ENCODE measurements at regions of chr2 and their contacts with region 1.

Region 1: DNA sequence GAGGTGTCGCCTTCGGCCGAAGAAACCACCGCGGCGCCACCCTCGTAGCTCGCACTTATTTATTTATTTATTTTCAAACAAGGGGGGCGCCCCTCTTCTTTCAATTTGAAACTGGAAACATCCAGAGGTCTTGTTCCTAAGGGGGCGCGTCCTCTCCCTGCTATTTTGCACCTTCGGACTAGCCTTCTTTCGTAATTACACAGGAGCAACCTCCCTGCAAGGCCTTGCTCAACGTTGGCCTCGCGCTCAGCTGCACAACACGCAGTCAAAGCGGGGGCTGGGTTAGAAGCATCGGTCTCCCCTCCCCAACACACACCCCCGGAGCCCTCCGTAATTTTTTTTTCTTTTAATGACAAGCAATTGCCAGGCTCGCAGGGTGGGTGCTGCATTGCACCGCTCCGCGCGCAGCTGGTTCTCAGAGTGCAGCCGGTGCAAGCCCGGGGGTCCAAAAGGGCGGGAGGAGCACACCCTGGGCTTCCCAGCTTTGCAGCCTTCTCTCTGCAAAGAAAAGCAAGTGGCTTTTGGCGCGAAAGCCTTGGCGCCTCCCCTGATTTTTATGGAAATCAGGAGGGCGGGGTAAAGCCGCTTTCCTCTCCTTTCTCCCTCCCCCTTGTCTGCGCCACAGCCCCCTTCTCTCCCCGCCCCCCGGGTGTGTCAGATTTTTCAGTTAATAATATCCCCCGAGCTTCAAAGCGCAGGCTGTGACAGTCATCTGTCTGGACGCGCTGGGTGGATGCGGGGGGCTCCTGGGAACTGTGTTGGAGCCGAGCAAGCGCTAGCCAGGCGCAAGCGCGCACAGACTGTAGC is at the start of gene MYCN:
- DNase-seq: no peak
- H3K4me3 ChIP-seq: peak within 1 kb of the TSS; percentile 47 to 63 (median 51)
- H3K27ac ChIP-seq: no peak within 1 kb of the TSS
- H3K4me1 ChIP-seq: peaks cover 41 to 49% (median 47%) of the 10 kb centered on the region in 4 donors
- H3K27me3 ChIP-seq: peaks cover 0 to 55% (median 20%) of the 10 kb centered on the region in 4 donors
- CTCF ChIP-seq: peak in 1 of 3 experiments; percentile 20
- EP300 ChIP-seq: no peak
- POLR2A ChIP-seq: no peak
- total RNA-seq, gene MYCN: 0.83 to 1.2 (median 1.1) TPM

Region 2: DNA sequence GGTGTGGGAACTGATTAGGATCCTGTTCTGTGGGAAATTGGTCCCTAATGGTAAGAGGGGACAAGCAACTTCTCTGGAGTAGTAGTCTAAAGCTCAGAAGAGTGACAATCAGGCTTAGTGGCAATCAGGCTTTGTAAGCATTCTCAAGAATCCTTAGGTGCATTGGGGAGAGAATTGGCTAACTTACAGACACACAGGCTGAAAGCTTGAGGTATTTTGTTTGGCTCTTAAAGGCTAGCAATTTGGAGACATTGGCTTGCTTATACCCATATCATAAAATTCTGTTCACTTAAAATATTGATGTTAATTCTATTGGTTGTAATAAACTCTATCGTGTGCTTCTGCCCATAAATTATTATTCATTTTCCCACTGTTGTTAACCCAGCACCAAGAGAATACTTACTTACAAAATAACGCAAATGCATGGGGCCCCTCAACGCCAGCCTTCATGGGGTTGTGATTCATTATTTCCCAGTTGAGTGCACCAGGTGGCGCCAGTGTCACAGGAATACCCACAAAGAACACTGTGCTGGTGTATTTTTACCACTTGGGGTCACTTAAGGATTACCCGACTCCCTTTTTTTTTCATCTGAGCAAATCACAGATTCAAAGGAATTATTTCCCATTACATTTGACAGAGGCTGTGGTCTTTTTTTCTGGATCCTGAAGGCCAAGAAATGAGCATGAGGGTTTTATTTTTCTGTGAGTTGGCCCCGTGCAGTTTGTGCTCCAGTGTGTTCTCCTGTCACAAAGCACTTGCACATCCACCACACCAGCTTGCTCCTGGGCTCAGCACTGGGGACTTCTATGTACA is 302.9 kb before region 1 on chr2:
- intact Hi-C with region 1: loop called (anchors 5 kb)
- DNase-seq: no peak
- H3K4me3 ChIP-seq: no peak overlapping the region
- H3K27ac ChIP-seq: peak overlapping the region in 1 of 4 donors; percentile 5
- H3K4me1 ChIP-seq: peaks cover 32 to 48% (median 39%) of the 10 kb centered on the region in 4 donors
- H3K27me3 ChIP-seq: no peaks in the 10 kb centered on the region
- CTCF ChIP-seq: peak; percentile 77 to 89 (median 86)
- EP300 ChIP-seq: no peak
- POLR2A ChIP-seq: no peak

Region 3: GRCh38 chr2:15748736-15749323 is 191.2 kb before region 1 on chr2:
- intact Hi-C with region 1: no loop called
- DNase-seq: no peak
- H3K4me3 ChIP-seq: no peak overlapping the region
- H3K27ac ChIP-seq: no peak overlapping the region
- H3K4me1 ChIP-seq: peaks cover 31 to 63% (median 57%) of the 10 kb centered on the region in 4 donors
- H3K27me3 ChIP-seq: no peaks in the 10 kb centered on the region
- CTCF ChIP-seq: peak in 2 of 3 experiments; percentile 20 to 29
- EP300 ChIP-seq: no peak
- POLR2A ChIP-seq: no peak

Region 4: GRCh38 chr2:16281451-16282336 is 341.6 kb after region 1 on chr2:
- intact Hi-C with region 1: loop called (anchors 10 kb)
- DNase-seq: peak; percentile 24
- H3K4me3 ChIP-seq: no peak overlapping the region
- H3K27ac ChIP-seq: no peak overlapping the region
- H3K4me1 ChIP-seq: no peaks in the 10 kb centered on the region
- H3K27me3 ChIP-seq: no peaks in the 10 kb centered on the region
- CTCF ChIP-seq: peak; percentile 28 to 47 (median 32)
- EP300 ChIP-seq: no peak
- POLR2A ChIP-seq: no peak

Region 5: GRCh38 chr2:16487686-16488085 is 547.6 kb after region 1 on chr2:
- intact Hi-C with region 1: loop called (anchors 10 kb)
- DNase-seq: no peak
- H3K4me3 ChIP-seq: no peak overlapping the region
- H3K27ac ChIP-seq: no peak overlapping the region
- H3K4me1 ChIP-seq: no peaks in the 10 kb centered on the region
- H3K27me3 ChIP-seq: no peaks in the 10 kb centered on the region
- CTCF ChIP-seq: peak; percentile 16 to 26 (median 22)
- EP300 ChIP-seq: no peak
- POLR2A ChIP-seq: no peak

Region 6: GRCh38 chr2:16507655-16508489 is 567.8 kb after region 1 on chr2:
- intact Hi-C with region 1: loop called (anchors 2 kb)
- DNase-seq: no peak
- H3K4me3 ChIP-seq: peak overlapping the region; percentile 47 to 59 (median 47)
- H3K27ac ChIP-seq: no peak overlapping the region
- H3K4me1 ChIP-seq: peaks cover 3 to 12% (median 11%) of the 10 kb centered on the region in 4 donors
- H3K27me3 ChIP-seq: peaks cover 0 to 30% (median 13%) of the 10 kb centered on the region in 4 donors
- CTCF ChIP-seq: peak; percentile 54 to 74 (median 58)
- EP300 ChIP-seq: no peak
- POLR2A ChIP-seq: no peak

Region 7: DNA sequence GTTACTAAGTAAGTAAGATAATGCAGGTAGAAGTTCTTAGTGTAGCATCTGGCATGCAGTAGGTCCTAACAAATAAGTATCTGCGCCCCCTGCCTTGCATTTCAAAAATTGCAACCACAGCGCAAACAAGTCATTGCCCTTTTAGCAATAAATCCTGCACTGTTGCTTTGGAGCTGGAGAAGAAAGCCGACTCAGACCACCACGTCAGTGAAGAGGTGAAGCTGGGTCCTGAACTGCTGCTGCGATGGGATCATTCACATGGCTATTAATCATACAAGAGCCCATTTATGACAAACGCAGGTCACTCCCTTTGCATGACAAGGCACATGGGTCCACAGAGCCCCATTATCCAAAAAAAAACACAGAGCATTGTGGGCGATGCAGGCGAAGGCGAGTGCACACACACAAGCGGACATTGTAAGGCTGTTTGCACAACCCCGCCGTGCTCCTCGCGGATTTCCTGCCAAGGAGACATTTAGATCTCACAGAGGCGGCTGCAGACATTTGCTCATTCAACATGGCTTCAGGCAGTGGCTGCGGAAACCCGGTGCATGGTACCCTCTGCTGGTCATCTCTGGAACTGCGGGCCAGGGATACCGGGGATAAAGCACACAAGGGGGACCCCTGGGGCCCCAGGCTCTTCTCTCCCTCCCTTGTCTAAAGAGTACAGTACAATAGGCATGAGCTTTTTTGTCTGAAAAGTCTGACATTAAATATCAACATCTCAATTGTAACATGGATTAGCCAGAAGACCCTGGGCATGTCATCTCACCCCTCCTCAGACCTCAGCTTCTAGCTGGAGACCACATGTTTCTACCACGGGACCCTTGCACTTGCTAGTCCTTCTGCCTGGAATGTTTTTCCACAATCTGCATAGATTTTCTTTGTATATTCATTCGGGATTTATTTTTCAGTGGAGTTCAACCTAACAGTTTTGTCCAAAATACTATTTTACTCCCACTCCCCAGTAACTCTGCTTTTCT is 668.9 kb after region 1 on chr2:
- intact Hi-C with region 1: loop called (anchors 10 kb)
- DNase-seq: peak; percentile 97
- H3K4me3 ChIP-seq: peak overlapping the region; percentile 41 to 52 (median 48)
- H3K27ac ChIP-seq: peak overlapping the region in 1 of 4 donors; percentile 15
- H3K4me1 ChIP-seq: peaks cover 7 to 25% (median 17%) of the 10 kb centered on the region in 4 donors
- H3K27me3 ChIP-seq: no peaks in the 10 kb centered on the region
- CTCF ChIP-seq: peak; percentile 84 to 94 (median 92)
- EP300 ChIP-seq: no peak
- POLR2A ChIP-seq: no peak